ENCODE measurements at regions of chr10 and their contacts with region 1.

Region 1: DNA sequence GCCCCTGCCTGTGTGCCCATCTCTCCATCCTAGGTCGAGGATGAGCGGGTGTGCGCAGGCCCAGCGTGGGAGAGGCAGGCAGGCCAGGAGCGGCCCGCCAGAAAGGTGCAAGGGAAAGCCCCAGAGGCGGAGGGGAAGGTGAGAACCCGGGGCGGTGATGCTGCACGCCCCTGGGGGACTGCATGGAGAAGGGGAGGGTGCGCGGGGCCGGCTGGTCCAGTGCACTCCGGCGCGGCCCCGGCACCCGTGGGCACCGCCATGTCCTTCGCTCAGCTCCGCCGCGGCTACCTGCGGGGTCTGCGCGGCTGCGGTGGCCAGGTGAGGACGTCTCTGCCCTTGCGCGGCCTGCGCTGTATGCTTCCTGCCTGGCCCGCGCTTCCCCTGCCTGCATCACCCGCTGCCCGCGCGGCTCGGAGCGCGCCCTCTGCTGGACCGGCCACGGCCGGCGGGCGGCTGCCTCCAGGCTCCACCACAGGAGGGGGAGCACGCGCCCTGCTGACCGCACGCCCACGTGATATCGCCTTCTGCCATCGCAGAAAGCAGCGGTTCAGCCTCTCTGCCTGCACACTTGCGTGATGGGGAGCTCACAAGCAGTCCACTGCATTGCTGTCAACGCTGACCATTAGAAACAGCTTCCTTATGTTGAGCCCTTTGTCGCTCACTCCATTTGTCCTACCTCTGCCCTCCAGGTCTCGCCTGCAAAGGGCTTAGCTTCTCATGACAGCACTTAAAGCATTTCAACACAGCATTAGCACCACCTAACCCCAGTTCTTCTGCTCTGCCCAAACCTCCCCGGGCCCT is 73.9 kb downstream of the CXCL12 start:
- DNase-seq: peak; percentile 11
- H3K4me3 ChIP-seq: no peak overlapping the region
- H3K27ac ChIP-seq: no peak overlapping the region
- H3K4me1 ChIP-seq: no peaks in the 10 kb centered on the region
- H3K27me3 ChIP-seq: no peaks in the 10 kb centered on the region
- CTCF ChIP-seq: peak in 1 of 2 donors; percentile 9

Region 2: DNA sequence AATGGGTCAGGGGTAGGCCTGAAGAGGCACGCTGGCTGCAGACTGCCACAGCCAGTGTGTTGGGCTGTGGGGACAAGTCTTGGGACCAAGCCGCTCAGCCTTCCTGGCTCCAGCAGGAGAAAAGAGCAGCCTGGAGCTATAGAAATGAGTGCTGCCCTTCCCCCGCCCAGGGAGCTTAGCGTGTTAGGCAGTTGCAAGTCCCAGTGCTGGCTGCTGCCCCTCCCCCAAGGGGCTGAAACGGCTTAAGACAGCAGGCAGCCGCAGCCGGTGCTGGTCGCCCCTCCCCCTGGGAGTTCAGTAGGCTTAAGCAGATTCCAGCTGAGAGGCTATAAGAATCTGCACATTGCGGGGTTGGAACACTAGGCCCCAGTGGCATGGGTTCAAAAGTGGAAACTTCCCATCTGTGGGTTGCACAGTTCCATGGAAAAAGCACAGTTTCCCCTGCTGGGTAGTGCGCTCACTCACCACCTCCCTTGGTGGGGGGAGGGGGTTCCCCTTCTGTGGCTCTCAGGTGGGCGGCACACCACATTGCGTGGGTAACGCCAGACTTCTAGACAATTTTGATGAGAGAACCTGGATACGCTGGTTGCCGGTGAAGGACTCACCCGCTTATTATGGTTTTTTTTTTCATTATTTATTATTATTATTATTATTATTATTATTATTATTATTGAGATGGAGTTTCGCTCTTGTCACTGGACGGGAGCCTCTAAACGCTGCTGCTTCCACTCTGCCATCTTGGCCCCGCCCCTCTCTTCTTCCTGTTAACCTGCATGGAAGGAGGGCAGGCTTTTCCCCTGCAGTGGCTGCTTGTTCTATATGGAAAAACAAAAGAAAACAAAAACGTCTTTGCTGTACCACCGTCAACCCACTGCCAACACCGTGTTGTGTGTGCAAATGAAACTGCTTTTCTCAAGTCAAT is 77.1 kb before region 1 on chr10:
- CTCF ChIA-PET with region 1: no interaction called
- dilution Hi-C with region 1: no loop called
- in situ Hi-C with region 1: no loop called
- intact Hi-C with region 1: no loop called
- DNase-seq: no peak
- H3K4me3 ChIP-seq: no peak overlapping the region
- H3K27ac ChIP-seq: no peak overlapping the region
- H3K4me1 ChIP-seq: no peaks in the 10 kb centered on the region
- H3K27me3 ChIP-seq: no peaks in the 10 kb centered on the region
- CTCF ChIP-seq: no peak

Region 3: DNA sequence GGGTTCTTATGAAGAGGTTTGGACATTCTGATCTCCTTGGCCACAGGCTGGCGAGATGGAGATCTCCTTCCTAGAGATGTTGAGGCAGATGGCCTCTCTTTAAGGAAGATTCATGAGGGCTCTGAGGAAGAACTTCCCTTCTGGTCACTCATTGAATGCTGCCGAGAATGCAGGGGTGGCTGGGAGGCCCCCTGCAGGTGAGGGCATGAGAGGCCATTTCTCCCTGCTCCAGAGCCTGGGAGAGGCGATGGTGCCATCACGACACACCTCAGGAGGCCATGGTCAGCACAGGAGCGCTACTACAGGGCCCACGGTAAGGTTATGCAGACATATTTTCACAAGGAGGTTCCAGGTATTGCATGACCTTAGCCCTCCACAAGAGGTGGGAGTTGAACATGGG is 33.8 kb after region 1 on chr10:
- CTCF ChIA-PET with region 1: no interaction called
- dilution Hi-C with region 1: loop called (anchors 5 kb)
- in situ Hi-C with region 1: no loop called
- intact Hi-C with region 1: no loop called
- DNase-seq: no peak
- H3K4me3 ChIP-seq: no peak overlapping the region
- H3K27ac ChIP-seq: no peak overlapping the region
- H3K4me1 ChIP-seq: no peaks in the 10 kb centered on the region
- H3K27me3 ChIP-seq: no peaks in the 10 kb centered on the region
- CTCF ChIP-seq: no peak

Region 4: GRCh38 chr10:44389150-44389549 is 78.2 kb after region 1 on chr10:
- CTCF ChIA-PET with region 1: no interaction called
- dilution Hi-C with region 1: no loop called
- in situ Hi-C with region 1: no loop called
- intact Hi-C with region 1: no loop called
- DNase-seq: no peak
- H3K4me3 ChIP-seq: no peak overlapping the region
- H3K27ac ChIP-seq: no peak overlapping the region
- H3K4me1 ChIP-seq: no peaks in the 10 kb centered on the region
- H3K27me3 ChIP-seq: peaks cover 4% of the 10 kb centered on the region
- CTCF ChIP-seq: no peak

Region 5: DNA sequence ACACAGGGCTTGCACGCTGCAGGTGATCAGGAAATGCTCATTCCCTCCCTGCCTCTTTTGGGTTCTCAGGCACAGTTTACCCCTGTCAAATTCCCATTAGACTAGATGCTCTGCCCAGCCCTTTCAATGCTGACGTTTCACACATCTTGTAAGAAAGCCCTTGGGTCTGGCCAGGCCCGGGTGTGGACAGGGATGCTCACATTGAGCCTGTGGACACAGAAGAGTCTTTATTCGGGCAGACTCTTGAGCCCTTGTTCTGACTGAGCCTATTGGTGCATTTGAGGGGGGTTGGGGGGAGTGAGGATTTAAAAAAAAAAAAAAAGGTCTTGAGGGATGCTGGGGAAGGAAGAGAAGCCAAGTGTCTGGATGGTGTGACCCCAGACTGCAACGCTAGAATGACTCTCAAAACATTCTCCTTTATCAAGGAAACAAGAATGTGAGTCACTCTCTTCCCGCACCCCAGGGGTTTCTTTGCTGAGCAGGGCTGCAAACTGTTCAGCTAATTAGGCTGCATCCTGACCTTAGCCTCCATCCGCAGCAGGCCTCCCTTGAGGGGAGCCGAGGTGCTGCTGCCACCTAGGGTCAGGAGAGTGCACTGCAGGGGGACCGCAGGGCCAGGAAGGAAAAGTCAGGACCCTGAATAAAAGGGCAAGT is 546.5 kb after region 1 on chr10:
- CTCF ChIA-PET with region 1: no interaction called
- dilution Hi-C with region 1: no loop called
- in situ Hi-C with region 1: no loop called
- intact Hi-C with region 1: loop called (anchors 5 kb)
- DNase-seq: peak; percentile 14
- H3K4me3 ChIP-seq: no peak overlapping the region
- H3K27ac ChIP-seq: no peak overlapping the region
- H3K4me1 ChIP-seq: no peaks in the 10 kb centered on the region
- H3K27me3 ChIP-seq: no peaks in the 10 kb centered on the region
- CTCF ChIP-seq: peak; percentile 95 to 98

Region 6: DNA sequence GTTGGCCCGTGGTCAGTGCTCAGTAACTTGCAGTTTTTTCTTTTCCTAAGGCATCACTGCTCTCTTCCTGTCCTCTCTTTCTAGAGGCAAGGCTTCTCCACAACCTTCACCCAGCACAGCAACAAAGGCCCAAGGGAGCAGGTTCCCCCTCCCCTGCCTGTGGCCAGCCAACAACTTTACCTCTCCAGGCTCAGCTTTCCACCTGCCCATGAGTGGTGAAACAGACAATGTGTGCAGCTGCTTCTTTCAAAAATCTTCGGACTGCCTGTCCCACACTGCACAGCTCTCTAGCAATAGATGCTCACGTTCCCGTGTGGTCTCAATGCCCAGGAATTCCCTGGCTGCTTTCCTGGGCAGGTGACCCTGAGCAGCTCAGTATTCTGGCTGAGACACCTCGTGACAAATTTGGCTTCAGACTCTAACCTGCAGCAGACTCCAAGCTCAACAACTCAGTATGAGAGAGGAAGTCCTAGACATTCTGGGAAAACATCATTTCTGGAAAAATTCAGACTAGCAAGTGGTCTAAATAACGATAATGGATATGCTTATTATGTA is 571.3 kb after region 1 on chr10:
- CTCF ChIA-PET with region 1: no interaction called
- dilution Hi-C with region 1: no loop called
- in situ Hi-C with region 1: no loop called
- intact Hi-C with region 1: no loop called
- DNase-seq: no peak
- H3K4me3 ChIP-seq: no peak overlapping the region
- H3K27ac ChIP-seq: no peak overlapping the region
- H3K4me1 ChIP-seq: peaks cover 3% of the 10 kb centered on the region
- H3K27me3 ChIP-seq: no peaks in the 10 kb centered on the region
- CTCF ChIP-seq: no peak

Measured in mammary epithelial cell (primary cell).